Activated T-helper 2 cell treated with anti-CD3 and anti-CD28 coated beads, Interferon-gamma antibody, Interleukin-2, Interleukin-4, amounts not matched to agents 10 μg/mL and 5 μg/mL and 100 μg/mL, durations not matched to agents 14 hours and 24 hours and 36 hours (primary cell): ENCODE measurements at regions of chr19 and their contacts with region 1.

Region 1: GRCh38 chr19:38975214-38975860 is at the start of gene FBXO17:
- DNase-seq: no peak
- H3K4me3 Mint-ChIP-seq: peak within 1 kb of the TSS; percentile 13
- H3K27ac Mint-ChIP-seq: no peak within 1 kb of the TSS
- H3K4me1 Mint-ChIP-seq: peaks cover 27% of the 10 kb centered on the region
- H3K27me3 Mint-ChIP-seq: peaks cover 23% of the 10 kb centered on the region
- total RNA-seq, gene FBXO17: not detected in 2 replicates

Region 2: GRCh38 chr19:38514812-38515633 is 460.3 kb before region 1 on chr19:
- intact Hi-C with region 1: no loop called
- DNase-seq: peak; percentile 71
- H3K4me3 Mint-ChIP-seq: no peak overlapping the region
- H3K27ac Mint-ChIP-seq: no peak overlapping the region
- H3K4me1 Mint-ChIP-seq: peaks cover 19% of the 10 kb centered on the region
- H3K27me3 Mint-ChIP-seq: peaks cover 3% of the 10 kb centered on the region

Region 3: GRCh38 chr19:38877781-38878574 is 97.4 kb before region 1 on chr19 and contains the start of gene RINL:
- intact Hi-C with region 1: no loop called
- DNase-seq: peak; percentile 62
- H3K4me3 Mint-ChIP-seq: peak within 1 kb of the TSS; percentile 91
- H3K27ac Mint-ChIP-seq: peak within 1 kb of the TSS; percentile 95
- H3K4me1 Mint-ChIP-seq: peaks cover 21% of the 10 kb centered on the region
- H3K27me3 Mint-ChIP-seq: no peaks in the 10 kb centered on the region
- total RNA-seq, gene RINL: 70.2 and 73.4 TPM in 2 replicates

Region 4: GRCh38 chr19:38964738-38965137 is 10.6 kb before region 1 on chr19:
- intact Hi-C with region 1: loop called (anchors 2 kb)
- DNase-seq: no peak
- H3K4me3 Mint-ChIP-seq: no peak overlapping the region
- H3K27ac Mint-ChIP-seq: no peak overlapping the region
- H3K4me1 Mint-ChIP-seq: peaks cover 3% of the 10 kb centered on the region
- H3K27me3 Mint-ChIP-seq: peaks cover 8% of the 10 kb centered on the region

Region 5: DNA sequence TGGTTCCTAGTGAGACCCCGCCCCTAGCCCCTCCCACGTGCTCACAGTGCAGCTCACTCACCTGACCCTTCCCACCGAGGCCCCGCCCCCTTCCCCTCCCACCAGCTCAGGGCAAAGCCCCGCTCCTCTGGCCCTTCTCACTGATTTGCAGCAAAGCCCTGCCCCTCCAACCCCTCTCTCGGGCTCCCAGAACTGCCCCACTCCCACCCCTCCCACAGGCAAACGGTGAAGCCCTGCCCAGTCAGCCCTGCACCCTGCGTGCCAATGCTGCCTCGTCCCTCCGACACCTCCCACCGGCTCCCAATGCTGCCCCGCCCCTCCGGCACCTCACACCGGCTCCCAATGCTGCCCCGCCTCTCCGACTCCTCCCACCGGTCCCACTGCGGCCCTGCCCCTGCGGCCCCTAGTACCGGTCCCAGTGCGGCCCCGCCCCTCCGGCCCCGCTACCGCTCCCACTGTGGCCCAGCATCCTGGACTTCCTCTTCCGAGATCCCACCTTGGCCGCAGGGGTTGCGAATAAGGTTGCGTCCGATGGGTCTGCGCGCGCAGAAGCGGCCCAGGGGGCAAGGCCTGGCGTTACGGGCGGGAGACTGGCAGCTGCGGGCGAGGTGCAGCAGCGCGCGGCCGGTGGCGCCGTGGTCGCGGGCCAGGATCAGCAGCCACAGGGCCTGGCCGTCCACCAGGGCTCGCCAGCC is 56.2 kb after region 1 on chr19:
- intact Hi-C with region 1: loop called (anchors 10 kb)
- DNase-seq: peak; percentile 67
- H3K4me3 Mint-ChIP-seq: peak overlapping the region; percentile 51
- H3K27ac Mint-ChIP-seq: no peak overlapping the region
- H3K4me1 Mint-ChIP-seq: peaks cover 7% of the 10 kb centered on the region
- H3K27me3 Mint-ChIP-seq: peaks cover 25% of the 10 kb centered on the region